Right ventricle myocardium superior (tissue), 1 donor: ENCODE measurements at regions of chr3 and their contacts with region 1.

Region 1: GRCh38 chr3:42229942-42230688 is 35.9 kb downstream of the CCK start:
- DNase-seq: no peak
- ATAC-seq: peak; percentile 41

Region 2: DNA sequence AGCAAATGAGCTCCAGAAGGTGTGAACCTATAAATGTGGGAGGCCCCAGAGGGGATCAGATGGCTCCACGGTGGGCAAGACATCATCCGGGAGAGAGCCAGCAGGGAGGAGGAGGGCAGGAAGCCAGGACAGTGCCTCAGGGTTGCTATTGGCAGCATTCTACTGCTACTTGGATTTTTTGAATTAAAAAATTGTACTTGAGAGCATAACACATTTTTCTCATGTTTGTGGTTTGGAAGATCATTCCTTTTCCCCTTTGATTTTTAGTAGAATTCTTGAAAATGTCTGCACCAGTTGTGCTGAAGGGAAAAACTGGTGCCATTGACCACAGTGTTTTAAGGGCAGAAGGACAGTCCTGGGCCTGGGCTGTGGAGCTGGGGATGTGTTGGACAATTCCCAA is 121.1 kb after region 1 on chr3:
- intact Hi-C with region 1: no loop called
- DNase-seq: no peak
- ATAC-seq: no peak

Region 3: DNA sequence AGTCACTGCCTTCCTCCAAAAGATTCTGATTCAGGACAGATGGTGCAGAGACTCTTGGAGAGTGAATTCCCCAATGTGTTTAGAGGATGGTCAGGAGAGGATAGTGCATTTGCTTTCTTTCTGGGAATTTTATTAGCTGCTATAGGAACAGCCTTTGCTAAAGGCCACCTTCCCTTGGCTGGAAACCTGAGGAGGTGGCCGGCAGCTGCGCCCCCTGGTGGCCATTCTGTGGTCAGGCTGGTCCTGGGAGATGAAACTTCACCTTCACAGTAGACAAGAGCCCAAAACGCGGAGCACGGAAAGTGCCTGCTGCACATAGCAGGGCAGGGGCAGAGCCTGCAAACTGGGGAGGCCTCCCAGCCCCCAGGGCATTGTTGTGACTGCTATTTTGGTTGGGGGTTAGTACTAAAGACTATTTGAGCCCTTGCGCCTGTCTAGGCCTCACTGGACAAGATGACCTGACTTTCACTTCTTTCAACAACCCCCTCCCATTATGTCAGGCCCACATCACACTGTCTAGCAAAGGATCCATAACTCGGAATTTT is 317.4 kb after region 1 on chr3:
- intact Hi-C with region 1: loop called (anchors 10 kb)
- DNase-seq: peak; percentile 81
- ATAC-seq: peak; percentile 73